MCF 10A (cell line): ENCODE measurements at regions of chr1 and their contacts with region 1.

Region 1: DNA sequence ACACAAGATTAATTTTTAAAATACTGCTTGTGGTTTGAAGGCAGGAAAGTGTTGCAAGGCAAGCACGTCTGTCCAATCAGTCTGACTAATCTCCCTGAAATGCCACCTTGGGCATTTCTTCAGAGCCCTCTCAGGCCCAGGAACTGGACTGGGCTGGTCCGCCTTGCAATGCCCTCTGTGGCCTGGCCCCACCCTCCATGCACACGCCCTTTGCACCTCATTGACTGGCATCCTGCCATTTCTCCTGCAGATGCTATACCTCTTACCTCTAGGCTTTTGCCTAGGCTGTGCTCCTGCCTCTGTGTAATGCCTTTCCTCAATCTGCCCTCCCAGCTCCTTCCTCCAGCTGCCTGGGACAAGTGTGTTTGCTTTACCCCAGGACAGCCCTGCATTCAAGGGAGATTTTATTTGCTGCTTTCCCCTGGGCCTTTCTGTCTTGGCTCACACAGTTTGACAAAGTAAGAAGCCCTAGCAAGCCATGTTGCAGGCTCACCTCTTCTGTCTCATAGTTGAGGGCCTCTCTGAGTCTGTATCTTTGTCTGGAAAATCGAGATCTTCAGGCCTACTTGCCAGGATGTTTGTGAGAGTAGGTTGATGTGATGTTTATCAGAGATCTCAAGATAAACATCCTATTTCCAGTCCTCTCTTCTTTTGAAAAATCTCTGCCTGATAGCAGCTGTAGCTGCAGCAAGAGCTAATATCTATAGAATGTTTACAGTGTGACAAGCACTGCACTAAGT is 149.2 kb upstream of the JUN start:
- DNase-seq: peak; percentile 99
- H3K4me3 Mint-ChIP-seq: peak overlapping the region; percentile 20
- H3K27ac Mint-ChIP-seq: peak overlapping the region; percentile 86
- H3K4me1 Mint-ChIP-seq: peaks cover 62% of the 10 kb centered on the region
- H3K27me3 Mint-ChIP-seq: no peaks in the 10 kb centered on the region
- CTCF ChIP-seq: no peak

Region 2: DNA sequence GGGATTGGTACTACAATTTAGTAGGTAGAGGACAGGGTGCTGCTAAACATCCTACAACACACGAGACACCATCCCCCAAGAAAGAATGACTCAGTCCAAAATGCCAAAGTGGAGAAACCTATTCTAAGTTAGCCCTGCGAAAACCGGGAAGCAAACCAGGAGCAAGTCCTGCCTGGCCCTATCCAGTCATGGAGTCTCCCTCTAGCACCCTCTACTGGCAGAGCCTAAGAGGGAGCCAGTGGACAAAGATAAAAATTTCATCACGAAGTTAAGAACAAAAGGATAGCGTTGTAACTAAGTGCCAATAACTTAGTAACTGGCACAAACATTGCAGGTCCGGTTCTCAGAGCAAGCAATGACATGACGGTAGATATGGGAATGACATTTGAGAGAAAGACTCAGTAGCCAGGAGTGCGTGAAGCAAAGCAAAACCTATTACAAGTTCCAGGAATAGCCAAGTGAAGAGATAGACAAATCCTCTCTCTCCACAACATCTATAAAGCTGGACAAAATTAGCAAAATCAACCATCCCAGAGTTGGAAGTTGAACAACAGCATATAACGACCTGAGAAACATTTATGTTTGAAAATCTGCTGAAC is 770.0 kb before region 1 on chr1:
- CTCF ChIA-PET with region 1: no interaction called
- POLR2A ChIA-PET with region 1: no interaction called
- intact Hi-C with region 1: no loop called
- DNase-seq: peak; percentile 85
- H3K4me3 Mint-ChIP-seq: no peak overlapping the region
- H3K27ac Mint-ChIP-seq: no peak overlapping the region
- H3K4me1 Mint-ChIP-seq: no peaks in the 10 kb centered on the region
- H3K27me3 Mint-ChIP-seq: no peaks in the 10 kb centered on the region
- CTCF ChIP-seq: peak; percentile 82

Region 3: GRCh38 chr1:58618303-58618702 is 314.7 kb before region 1 on chr1:
- CTCF ChIA-PET with region 1: no interaction called
- POLR2A ChIA-PET with region 1: no interaction called
- intact Hi-C with region 1: no loop called
- DNase-seq: peak; percentile 99
- H3K4me3 Mint-ChIP-seq: peak overlapping the region; percentile 24
- H3K27ac Mint-ChIP-seq: peak overlapping the region; percentile 91
- H3K4me1 Mint-ChIP-seq: peaks cover 36% of the 10 kb centered on the region
- H3K27me3 Mint-ChIP-seq: no peaks in the 10 kb centered on the region
- CTCF ChIP-seq: no peak

Region 4: DNA sequence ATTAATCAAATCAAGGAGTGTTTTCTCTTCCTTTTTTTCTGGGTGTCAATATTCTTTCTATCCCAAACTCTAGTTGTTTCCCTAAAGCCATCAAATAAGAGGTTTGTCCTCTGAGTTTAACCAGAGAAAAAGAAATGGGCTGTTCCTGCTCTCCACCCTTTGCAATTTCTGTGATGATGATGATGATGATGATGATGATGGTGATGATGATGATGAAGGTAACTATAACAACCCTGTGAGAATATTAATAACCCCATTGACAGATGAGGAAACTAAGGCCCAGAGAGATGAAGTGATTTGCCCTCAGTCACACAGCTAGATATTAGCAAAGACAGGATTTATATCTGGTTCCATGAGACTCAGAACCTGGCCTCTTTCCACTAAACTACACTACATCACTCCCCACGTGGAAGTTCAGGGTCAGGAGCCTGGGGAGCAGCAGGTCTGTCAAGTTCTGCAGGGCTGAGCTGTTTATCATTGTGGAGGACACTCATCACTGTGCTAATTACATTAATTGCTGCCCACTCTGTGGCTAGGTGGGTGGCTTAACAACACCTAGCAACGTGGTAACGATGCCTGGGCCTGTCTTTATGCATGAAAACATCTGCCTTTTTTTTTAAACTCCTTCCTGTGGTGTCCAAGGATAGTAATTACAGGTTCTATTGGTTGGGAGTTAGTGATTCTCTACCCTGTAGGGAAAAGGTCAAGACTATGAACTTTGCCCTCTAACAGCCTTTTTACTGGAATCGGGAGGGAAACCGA is 130.2 kb before region 1 on chr1:
- CTCF ChIA-PET with region 1: no interaction called
- POLR2A ChIA-PET with region 1: no interaction called
- intact Hi-C with region 1: no loop called
- DNase-seq: no peak
- H3K4me3 Mint-ChIP-seq: no peak overlapping the region
- H3K27ac Mint-ChIP-seq: no peak overlapping the region
- H3K4me1 Mint-ChIP-seq: no peaks in the 10 kb centered on the region
- H3K27me3 Mint-ChIP-seq: no peaks in the 10 kb centered on the region
- CTCF ChIP-seq: no peak

Region 5: DNA sequence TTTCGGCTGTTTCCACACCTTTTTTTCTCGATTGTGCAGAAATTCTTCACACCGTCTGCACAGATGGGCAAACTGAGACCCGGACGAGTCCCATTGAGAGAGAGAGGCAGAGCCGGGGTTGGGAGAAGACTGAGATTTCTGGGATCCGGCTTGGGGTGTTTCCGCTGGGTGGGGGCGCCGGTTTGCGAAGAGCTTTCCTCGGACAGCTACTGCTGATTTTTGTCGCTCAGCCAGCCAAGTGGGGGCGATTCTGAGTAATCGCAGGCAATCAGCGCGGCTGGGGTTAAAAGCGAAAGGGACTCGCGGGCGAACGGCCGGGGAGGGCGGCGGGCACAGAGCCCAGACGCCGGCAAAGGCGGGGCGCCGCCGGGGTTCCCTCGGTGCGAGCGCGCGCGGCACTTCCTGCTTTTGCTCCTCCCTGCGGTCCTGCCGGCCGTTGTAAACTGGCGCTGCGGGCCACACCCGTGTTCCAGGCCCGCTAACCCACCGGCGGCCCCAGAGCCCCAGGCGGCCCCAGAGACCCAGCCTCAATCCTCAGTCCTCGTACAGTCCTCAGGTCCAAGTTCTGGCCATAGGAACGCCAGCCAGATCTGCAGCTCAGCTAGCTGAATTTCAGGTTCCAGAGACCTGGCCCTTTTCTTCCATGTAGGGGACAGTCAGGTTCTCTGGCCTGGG is 116.8 kb before region 1 on chr1:
- CTCF ChIA-PET with region 1: no interaction called
- POLR2A ChIA-PET with region 1: interaction called, 5 read pairs
- intact Hi-C with region 1: loop called (anchors 2 kb)
- DNase-seq: peak; percentile 88
- H3K4me3 Mint-ChIP-seq: peak overlapping the region; percentile 78
- H3K27ac Mint-ChIP-seq: peak overlapping the region; percentile 91
- H3K4me1 Mint-ChIP-seq: peaks cover 33% of the 10 kb centered on the region
- H3K27me3 Mint-ChIP-seq: no peaks in the 10 kb centered on the region
- CTCF ChIP-seq: no peak

Region 6: GRCh38 chr1:58883037-58883887 is 49.8 kb before region 1 on chr1:
- CTCF ChIA-PET with region 1: interaction called, 5 read pairs
- POLR2A ChIA-PET with region 1: interaction called, 7 read pairs
- intact Hi-C with region 1: loop called (anchors 2 kb)
- DNase-seq: peak; percentile 99
- H3K4me3 Mint-ChIP-seq: no peak overlapping the region
- H3K27ac Mint-ChIP-seq: peak overlapping the region; percentile 8
- H3K4me1 Mint-ChIP-seq: peaks cover 44% of the 10 kb centered on the region
- H3K27me3 Mint-ChIP-seq: no peaks in the 10 kb centered on the region
- CTCF ChIP-seq: no peak

Region 7: GRCh38 chr1:59057211-59057694 is 124.2 kb after region 1 on chr1:
- CTCF ChIA-PET with region 1: interaction called, 3 read pairs
- POLR2A ChIA-PET with region 1: interaction called, 11 read pairs
- intact Hi-C with region 1: no loop called
- DNase-seq: peak; percentile 77
- H3K4me3 Mint-ChIP-seq: no peak overlapping the region
- H3K27ac Mint-ChIP-seq: peak overlapping the region; percentile 50
- H3K4me1 Mint-ChIP-seq: peaks cover 21% of the 10 kb centered on the region
- H3K27me3 Mint-ChIP-seq: no peaks in the 10 kb centered on the region
- CTCF ChIP-seq: no peak

Region 8: DNA sequence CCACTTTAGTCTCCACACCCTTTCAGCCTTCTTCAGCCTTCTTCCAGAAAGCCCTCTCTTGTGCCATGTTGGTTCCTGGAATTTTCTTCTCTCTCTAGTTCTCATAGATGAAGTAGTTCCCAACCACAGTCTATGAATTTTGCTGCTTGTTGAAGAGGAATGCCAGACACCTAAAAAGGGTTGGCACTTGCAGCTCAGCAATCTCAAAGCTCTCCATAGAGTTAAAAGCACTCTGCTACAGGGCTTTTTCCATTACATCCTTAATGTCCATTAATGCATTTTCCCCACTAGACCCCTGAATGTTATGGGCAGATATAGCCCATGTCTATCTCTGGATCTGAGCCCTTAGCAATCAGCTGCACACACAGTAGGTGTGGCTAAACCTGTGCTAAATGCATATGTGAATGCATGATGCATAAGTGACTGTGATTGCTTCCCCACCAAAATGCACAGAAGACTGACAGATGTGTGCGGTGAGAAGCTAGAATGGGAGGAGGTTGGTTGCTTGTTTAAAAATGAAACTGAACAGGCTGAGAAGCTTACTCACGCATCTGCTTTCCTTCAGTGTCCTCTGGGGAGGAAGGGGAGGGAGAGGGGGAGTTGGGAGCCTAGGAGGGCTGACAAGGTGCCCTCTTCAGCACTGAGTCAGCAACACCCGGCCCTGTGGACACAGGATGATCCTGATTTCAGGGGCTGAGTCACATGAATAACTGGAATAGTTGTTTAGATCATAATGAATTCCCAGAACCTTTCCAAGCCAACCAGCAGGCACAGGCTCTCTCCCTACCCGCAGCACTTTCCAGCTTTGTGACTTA is 217.8 kb after region 1 on chr1:
- CTCF ChIA-PET with region 1: no interaction called
- POLR2A ChIA-PET with region 1: no interaction called
- intact Hi-C with region 1: loop called (anchors 5 kb)
- DNase-seq: peak; percentile 96
- H3K4me3 Mint-ChIP-seq: peak overlapping the region; percentile 65
- H3K27ac Mint-ChIP-seq: peak overlapping the region; percentile 86
- H3K4me1 Mint-ChIP-seq: peaks cover 22% of the 10 kb centered on the region
- H3K27me3 Mint-ChIP-seq: no peaks in the 10 kb centered on the region
- CTCF ChIP-seq: no peak